ENCODE measurements at regions of chr16 and their contacts with region 1.

Region 1: GRCh38 chr16:86300746-86301481 is 209.4 kb upstream of the FOXF1 start:
- DNase-seq: no peak
- ATAC-seq: no peak
- H3K4me3 ChIP-seq: no peak overlapping the region
- H3K27ac ChIP-seq: no peak overlapping the region
- H3K4me1 ChIP-seq: no peaks in the 10 kb centered on the region
- H3K27me3 ChIP-seq: peaks cover 21 to 87% of the 10 kb centered on the region in 2 experiments
- CTCF ChIP-seq: no peak
- EP300 ChIP-seq: no peak
- POLR2A ChIP-seq: no peak
- RAD21 ChIP-seq: no peak

Region 2: GRCh38 chr16:86072328-86073102 is 228.4 kb before region 1 on chr16:
- CTCF ChIA-PET with region 1: no interaction called
- POLR2A ChIA-PET with region 1: no interaction called
- in situ Hi-C with region 1: loop called (anchors 10 kb)
- intact Hi-C with region 1: no loop called
- DNase-seq: peak; percentile 41
- ATAC-seq: peak; percentile 56
- H3K4me3 ChIP-seq: no peak overlapping the region
- H3K27ac ChIP-seq: no peak overlapping the region
- H3K4me1 ChIP-seq: peaks cover 8% of the 10 kb centered on the region; the same call in 1 of the 2 replicates
- H3K27me3 ChIP-seq: peaks cover 0 to 26% of the 10 kb centered on the region in 2 experiments; a peak in 3 of 5 replicates
- CTCF ChIP-seq: peak; percentile 78
- EP300 ChIP-seq: no peak
- POLR2A ChIP-seq: no peak
- RAD21 ChIP-seq: peak; percentile 66

Region 3: GRCh38 chr16:86285938-86286921 is 14.7 kb before region 1 on chr16:
- CTCF ChIA-PET with region 1: no interaction called
- POLR2A ChIA-PET with region 1: no interaction called
- in situ Hi-C with region 1: no loop called
- intact Hi-C with region 1: no loop called
- DNase-seq: no peak
- ATAC-seq: no peak
- H3K4me3 ChIP-seq: no peak overlapping the region
- H3K27ac ChIP-seq: no peak overlapping the region
- H3K4me1 ChIP-seq: no peaks in the 10 kb centered on the region
- H3K27me3 ChIP-seq: peaks cover 9 to 88% of the 10 kb centered on the region in 2 experiments
- CTCF ChIP-seq: no peak
- EP300 ChIP-seq: no peak
- POLR2A ChIP-seq: no peak
- RAD21 ChIP-seq: no peak

Measured in HepG2 (cell line).